ENCODE measurements at regions of chr12 and their contacts with region 1.

Region 1: GRCh38 chr12:52865090-52865944 is 16.5 kb upstream of the KRT78 start:
- ATAC-seq: peak; percentile 59 to 95 (median 75)
- H3K4me3 ChIP-seq: no peak overlapping the region
- H3K27ac ChIP-seq: no peak overlapping the region
- H3K4me1 ChIP-seq: no peaks in the 10 kb centered on the region

Region 2: GRCh38 chr12:52561880-52562449 is 303.4 kb before region 1 on chr12:
- in situ Hi-C with region 1: no loop called
- ATAC-seq: no peak
- H3K4me3 ChIP-seq: no peak overlapping the region
- H3K27ac ChIP-seq: no peak overlapping the region
- H3K4me1 ChIP-seq: no peaks in the 10 kb centered on the region

Region 3: GRCh38 chr12:52582971-52583456 is 282.3 kb before region 1 on chr12:
- in situ Hi-C with region 1: loop called in 3 of 9 experiments (anchors 10 to 25 kb)
- ATAC-seq: peak; percentile 50 to 91 (median 74)
- H3K4me3 ChIP-seq: no peak overlapping the region
- H3K27ac ChIP-seq: no peak overlapping the region
- H3K4me1 ChIP-seq: no peaks in the 10 kb centered on the region

Measured in motor neuron (in vitro differentiated cells).